ENCODE measurements at regions of chr5 and their contacts with region 1.

Region 1: GRCh38 chr5:73902327-73903051 is 276.5 kb downstream of the ARHGEF28 start:
- DNase-seq: no peak
- H3K4me3 ChIP-seq: no peak overlapping the region
- H3K27ac ChIP-seq: no peak overlapping the region
- H3K4me1 ChIP-seq: peaks cover 0 to 9% (median 0%) of the 10 kb centered on the region in 3 donors
- H3K27me3 ChIP-seq: no peaks in the 10 kb centered on the region
- CTCF ChIP-seq: peak; percentile 76 to 97 (median 90)
- POLR2A ChIP-seq: no peak

Region 2: DNA sequence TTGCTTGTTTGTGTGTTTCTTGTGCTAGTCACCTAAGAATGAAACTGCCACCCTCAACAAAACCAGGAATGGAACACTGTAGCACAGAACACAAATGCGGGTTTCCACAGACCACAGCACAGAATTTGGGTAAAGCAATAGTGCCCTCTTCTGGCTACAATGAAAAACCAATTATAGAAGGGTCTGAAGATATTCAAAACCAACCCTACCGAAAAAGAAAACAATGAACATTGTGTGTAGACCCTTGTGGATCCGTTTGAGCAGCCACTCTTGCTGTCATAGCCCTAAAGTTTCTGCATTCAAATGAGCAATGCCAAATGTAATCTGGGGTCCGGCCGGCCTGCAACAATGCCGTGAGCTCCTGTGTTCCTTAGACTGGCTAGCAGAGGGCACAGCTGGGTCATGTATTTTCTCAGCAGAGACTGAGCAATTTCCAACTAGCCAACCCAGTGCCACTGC is 746.4 kb after region 1 on chr5:
- intact Hi-C with region 1: loop called (anchors 5 kb)
- DNase-seq: no peak
- H3K4me3 ChIP-seq: no peak overlapping the region
- H3K27ac ChIP-seq: no peak overlapping the region
- H3K4me1 ChIP-seq: peaks cover 0 to 15% (median 2%) of the 10 kb centered on the region in 3 donors
- H3K27me3 ChIP-seq: no peaks in the 10 kb centered on the region
- CTCF ChIP-seq: peak in 5 of 6 experiments; percentile 64 to 80 (median 74)
- POLR2A ChIP-seq: no peak

Region 3: DNA sequence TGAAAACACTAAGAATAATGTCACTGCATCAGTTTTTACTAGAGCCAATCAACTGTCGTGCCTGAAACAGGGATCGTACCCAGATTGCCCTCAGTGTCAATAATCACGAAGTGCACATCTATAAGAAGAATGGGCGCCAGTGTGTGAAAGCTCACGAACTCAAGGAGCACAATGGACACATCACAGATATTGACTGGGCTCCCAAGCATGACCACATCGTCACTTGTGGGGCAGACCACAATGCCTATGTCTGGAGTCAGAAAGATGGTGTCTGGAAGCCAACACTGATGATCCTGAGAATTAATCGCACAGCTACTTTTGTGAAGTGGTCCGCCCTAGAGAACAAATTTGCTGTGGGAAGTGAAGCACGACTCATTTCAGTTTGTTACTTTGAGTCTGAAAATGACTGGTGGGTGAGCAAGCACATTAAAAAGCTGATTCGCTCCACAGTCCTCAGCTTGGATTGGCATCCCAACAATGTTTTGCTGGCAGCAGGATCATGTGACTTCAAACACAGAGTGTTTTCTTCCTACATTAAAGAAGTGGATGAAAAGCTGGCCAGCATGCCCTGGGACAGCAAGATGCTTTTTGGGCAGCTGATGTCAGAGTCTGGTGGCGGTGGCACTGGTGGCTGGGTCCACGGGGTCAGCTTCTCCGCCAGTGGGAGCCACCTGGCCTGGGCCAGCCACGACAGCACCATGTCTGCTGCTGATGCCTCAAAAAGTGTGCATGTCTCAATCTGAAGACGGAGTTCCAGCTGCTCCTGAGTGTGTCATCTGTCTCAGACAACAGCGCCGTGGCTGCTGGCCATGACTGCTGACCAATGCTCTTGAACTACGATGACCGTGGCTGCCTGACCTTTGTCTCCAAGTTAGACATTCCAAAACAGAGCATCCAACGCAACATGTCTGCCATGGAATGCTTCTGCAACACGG is 896.8 kb after region 1 on chr5:
- intact Hi-C with region 1: no loop called
- DNase-seq: no peak
- H3K4me3 ChIP-seq: no peak overlapping the region
- H3K27ac ChIP-seq: no peak overlapping the region
- H3K4me1 ChIP-seq: no peaks in the 10 kb centered on the region
- H3K27me3 ChIP-seq: no peaks in the 10 kb centered on the region
- CTCF ChIP-seq: no peak
- POLR2A ChIP-seq: no peak